ENCODE measurements at regions of chr4 and their contacts with region 1.

Region 1: DNA sequence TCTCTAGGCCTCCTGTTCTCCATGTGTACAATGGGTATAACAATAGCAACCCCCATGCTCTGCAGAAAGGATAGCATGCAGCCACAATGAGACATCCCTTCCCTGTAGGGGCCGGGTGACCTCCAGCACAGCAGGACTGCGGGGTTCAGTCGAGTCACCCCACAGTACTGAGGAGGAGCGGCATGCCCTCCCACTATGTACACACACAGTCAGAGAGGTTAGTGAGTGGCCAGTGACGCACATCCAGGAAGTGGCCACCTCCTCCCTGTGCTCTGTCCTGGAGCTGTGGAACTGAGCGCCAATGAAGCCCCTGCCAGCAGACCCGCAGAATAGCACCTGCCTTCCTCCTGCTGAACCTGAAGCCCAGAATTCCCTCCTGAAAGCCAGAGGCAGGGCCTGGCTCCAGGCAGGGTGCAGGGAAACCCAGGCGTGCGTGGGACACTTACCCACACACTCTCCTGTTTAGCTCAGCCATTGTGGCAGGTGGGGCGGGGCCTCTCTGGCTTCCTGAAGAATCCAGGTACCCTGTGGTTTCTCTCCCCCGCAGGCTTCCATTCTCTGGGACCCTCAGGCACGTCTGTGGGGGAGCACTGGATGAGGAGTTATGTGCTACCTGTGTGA is 50.0 kb downstream of the WFS1 start:
- DNase-seq: no peak
- ATAC-seq: no peak
- H3K4me3 ChIP-seq: no peak overlapping the region
- H3K27ac ChIP-seq: no peak overlapping the region
- H3K4me1 ChIP-seq: no peaks in the 10 kb centered on the region
- H3K27me3 ChIP-seq: peaks cover 0 to under 1% of the 10 kb centered on the region in 2 experiments; a peak in 3 of 4 replicates
- CTCF ChIP-seq: no peak
- EP300 ChIP-seq: no peak
- POLR2A ChIP-seq: no peak
- RAD21 ChIP-seq: no peak

Region 2: GRCh38 chr4:6264225-6264540 is 55.5 kb before region 1 on chr4:
- CTCF ChIA-PET with region 1: interaction called, 419 read pairs
- POLR2A ChIA-PET with region 1: interaction called, 3 read pairs
- RAD21 ChIA-PET with region 1: interaction called, 65 read pairs
- SMC1A ChIA-PET with region 1: interaction called, 13 read pairs
- in situ Hi-C with region 1: no loop called
- intact Hi-C with region 1: no loop called
- DNase-seq: no peak
- ATAC-seq: peak; percentile 83
- H3K4me3 ChIP-seq: no peak overlapping the region
- H3K27ac ChIP-seq: no peak overlapping the region
- H3K4me1 ChIP-seq: peaks cover 15% of the 10 kb centered on the region
- H3K27me3 ChIP-seq: no peaks in the 10 kb centered on the region
- CTCF ChIP-seq: peak; percentile 57 to 64 (median 59)
- EP300 ChIP-seq: no peak
- POLR2A ChIP-seq: no peak
- RAD21 ChIP-seq: peak; percentile 80